ENCODE measurements at regions of chr21 and their contacts with region 1.

Region 1: GRCh38 chr21:40143822-40144525 is 276.7 kb downstream of the PCP4 start:
- DNase-seq: no peak

Region 2: DNA sequence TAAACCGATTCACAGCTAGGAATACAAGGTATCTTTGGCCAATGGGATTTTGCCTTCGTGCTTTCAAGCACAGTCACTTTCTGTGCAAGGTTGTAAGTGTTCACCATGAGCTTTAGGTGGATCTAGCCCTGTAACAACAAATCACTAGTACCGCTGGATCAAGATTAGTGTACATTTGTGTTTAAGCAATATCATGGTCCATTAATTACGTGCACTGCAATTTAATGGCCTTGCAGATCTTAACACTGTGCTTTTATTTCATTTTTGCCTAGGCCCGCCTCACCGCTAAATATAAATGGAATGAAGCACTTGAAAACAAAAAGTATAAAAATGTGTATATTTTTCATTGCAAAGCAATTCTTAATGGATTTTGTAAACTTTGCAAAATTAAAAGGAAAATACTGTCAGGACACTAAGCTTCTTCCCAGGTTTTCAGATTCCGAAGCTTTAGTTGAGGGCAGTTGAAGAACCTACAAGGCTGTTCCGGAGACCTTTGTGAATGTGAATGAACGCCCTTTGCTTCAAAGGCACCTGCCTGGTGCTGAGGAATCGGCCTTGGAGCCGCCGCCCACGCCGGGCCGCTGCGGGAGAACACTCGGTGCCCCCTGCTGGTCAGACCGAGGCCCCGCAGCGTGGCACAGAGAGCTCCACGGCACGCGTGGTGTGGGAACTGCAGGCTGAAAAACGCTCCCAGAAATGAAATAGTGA is 242.1 kb after region 1 on chr21:
- intact Hi-C with region 1: loop called (anchors 5 kb)
- DNase-seq: no peak

Region 3: DNA sequence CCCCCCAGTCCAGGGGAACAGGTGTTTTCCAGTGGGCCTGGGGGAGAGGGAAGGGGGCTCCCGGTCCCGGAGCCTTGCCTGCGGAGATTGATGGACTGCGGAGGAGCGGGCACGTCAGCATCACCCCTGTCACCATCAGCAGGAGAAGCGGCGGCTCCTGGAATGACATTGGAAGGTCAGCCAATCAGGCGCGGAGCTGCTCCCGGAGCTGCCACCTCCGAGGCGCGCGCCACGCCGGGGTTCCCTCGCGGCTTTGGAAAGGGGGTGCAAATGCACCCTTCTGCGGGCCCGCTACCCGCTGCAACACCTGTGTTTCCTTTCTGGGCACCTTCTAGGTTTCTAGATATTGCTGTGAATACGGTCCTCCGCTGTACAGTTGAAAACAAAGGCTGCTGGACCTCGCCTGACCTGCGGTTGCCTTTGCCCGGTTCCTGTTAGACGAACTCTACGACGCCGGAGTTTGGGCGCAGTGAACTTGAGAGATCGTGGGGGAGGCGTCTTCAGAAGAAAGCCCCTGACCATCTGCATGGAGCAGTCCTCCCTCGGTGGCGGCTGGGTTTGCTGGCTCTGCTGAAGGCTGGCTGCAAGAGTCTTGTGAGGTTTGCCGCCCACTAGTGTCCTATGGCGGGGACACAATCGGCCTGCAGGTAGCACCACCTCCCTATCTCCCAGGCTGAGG is 697.7 kb after region 1 on chr21:
- intact Hi-C with region 1: loop called (anchors 10 kb)
- DNase-seq: no peak

Region 4: DNA sequence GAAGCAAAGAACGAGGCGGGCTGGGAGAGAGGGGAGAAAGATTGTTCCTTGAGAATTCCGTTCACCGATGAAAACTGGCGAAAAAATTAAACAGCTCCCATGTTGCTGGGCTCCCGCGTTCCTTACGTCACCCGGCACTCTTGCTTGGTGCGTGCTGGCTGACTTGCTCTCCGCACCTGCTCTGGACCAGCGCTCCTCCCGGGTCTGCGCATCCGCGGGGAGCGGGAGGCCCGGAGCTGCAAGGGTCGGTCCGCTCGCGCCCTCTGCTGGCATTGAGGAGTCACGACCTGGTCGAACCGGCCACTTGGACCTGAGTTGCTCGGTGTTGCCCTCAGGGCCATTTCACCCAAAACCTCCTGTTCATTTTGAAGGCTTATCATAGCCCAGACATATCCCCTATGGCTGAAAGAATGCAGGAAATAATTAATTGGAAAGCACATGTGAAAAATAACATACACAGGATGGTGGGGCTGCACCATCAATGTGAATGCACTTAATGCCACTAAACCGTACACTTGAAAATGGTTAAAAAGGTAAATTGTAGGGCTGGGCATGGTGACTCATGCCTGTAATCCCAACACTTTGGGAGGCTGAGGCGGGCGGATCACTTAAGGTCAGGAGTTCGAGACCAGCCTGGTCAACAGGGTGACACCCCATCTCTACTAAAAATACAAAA is 925.1 kb after region 1 on chr21:
- intact Hi-C with region 1: loop called (anchors 2 kb)
- DNase-seq: peak; percentile 86

Region 5: DNA sequence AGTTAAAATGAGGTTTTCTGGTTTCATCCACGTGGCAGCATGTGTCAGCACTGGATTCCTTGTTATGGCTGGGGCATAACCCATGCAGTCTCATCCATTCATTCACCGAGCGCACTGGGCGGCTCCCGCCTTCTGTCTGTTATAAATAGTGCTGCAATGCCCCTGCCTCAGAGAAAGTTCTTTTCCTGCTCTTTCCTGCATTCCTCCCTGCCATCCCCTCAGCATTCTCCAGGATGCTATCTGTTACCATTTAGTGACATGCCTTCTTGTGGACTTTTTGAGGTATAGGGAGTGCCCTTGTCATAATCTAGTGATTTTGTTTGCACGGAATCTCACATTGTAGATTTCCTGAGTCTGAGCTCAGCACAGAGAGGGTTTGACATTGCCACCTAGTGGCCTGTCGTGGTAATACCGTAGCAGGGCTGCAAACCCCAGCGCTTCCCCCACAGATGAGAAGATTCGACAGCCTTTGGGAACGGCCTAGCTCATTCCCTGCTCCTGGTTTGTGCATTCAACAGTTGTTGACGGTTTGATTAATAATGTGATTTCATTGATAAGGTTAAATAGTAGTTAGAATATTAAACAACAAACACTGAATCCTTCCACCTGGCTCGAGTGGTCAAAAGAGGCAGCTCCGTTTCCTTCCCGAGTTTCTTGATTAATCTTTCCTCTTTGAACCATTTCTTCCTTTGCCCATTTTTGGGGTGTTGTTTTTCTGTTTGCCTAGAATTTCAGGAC is 1973.4 kb after region 1 on chr21:
- intact Hi-C with region 1: no loop called
- DNase-seq: no peak